Activated T-helper 1 cell treated with anti-CD3 and anti-CD28 coated beads, Interleukin-12 subunit alpha, Interleukin-12 subunit beta, Interleukin-2, Interleukin-4 antibody, amounts not matched to agents 30 ng/mL and 10 ng/mL and 1 ng/mL, durations not matched to agents 14 hours and 24 hours and 36 hours (primary cell): ENCODE measurements at regions of chr6 and their contacts with region 1.

Region 1: DNA sequence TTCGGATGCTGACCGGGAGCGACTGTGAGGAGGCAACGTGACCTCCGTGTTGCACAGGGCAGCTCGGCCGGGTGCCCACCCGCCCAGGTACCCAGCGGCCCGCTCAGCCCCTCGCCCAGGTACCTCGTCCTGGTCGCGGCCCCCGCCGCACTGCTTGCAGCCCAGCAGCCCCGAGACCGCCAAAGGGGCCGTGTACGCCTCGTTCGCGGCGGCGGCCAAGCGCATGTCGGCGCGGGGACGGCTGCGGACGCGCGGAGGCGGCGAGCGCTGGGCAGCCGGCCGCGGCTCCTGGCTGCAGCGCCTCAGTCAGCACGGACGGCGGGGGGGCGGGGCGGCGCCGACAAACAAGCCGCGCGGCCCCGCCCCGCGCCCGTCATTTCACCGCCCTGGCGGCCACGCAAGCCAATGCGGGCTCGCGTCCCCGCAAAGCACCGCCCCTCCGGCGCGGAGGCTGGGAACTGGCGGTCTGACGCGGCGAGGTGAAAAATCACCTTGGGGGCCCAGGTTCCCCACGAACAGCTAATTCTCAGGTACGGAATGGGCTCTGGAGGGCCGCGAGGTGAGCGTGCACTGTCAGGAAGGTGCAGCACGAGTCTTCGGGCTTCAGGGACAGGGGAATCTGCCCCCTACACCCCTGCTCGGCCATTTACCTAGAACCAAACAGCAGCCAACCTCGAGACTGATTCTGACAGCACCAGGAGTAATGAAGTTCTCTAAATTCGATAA is 85.2 kb downstream of the SESN1 start:
- DNase-seq: peak; percentile 87
- H3K4me3 Mint-ChIP-seq: peak overlapping the region; percentile 92
- H3K27ac Mint-ChIP-seq: peak overlapping the region; percentile 84
- H3K4me1 Mint-ChIP-seq: peaks cover 31% of the 10 kb centered on the region
- H3K27me3 Mint-ChIP-seq: no peaks in the 10 kb centered on the region

Region 2: GRCh38 chr6:108541838-108542759 is 467.3 kb before region 1 on chr6:
- intact Hi-C with region 1: loop called (anchors 5 kb)
- DNase-seq: peak; percentile 52
- H3K4me3 Mint-ChIP-seq: no peak overlapping the region
- H3K27ac Mint-ChIP-seq: no peak overlapping the region
- H3K4me1 Mint-ChIP-seq: peaks cover 10% of the 10 kb centered on the region
- H3K27me3 Mint-ChIP-seq: peaks cover 39% of the 10 kb centered on the region

Region 3: GRCh38 chr6:108820006-108820405 is 189.4 kb before region 1 on chr6:
- intact Hi-C with region 1: no loop called
- DNase-seq: no peak
- H3K4me3 Mint-ChIP-seq: no peak overlapping the region
- H3K27ac Mint-ChIP-seq: no peak overlapping the region
- H3K4me1 Mint-ChIP-seq: no peaks in the 10 kb centered on the region
- H3K27me3 Mint-ChIP-seq: peaks cover 23% of the 10 kb centered on the region

Region 4: GRCh38 chr6:108883172-108883571 is 126.2 kb before region 1 on chr6:
- intact Hi-C with region 1: loop called (anchors 1 kb)
- DNase-seq: no peak
- H3K4me3 Mint-ChIP-seq: peak overlapping the region; percentile 56
- H3K27ac Mint-ChIP-seq: peak overlapping the region; percentile 93
- H3K4me1 Mint-ChIP-seq: peaks cover 58% of the 10 kb centered on the region
- H3K27me3 Mint-ChIP-seq: peaks cover 28% of the 10 kb centered on the region

Region 5: DNA sequence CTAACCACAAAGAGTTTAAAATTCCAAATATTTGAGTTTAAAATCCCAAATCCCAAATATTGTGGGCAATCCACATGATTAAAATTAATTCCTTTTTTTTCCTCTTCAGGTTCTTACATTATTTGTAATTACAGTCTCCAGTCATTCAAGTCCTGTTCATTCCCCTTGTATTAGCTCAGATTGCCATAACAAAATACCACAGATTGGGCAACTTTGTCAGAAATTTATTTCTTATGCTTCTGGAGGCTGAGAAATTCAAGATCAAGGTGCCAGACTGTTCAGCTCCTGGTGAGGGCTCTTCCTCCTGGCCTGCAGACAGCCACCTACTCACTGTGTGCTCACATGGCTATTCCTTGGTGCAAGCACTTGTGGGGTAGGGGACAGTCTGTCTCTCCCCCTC is 55.7 kb before region 1 on chr6:
- intact Hi-C with region 1: loop called (anchors 2 kb)
- DNase-seq: no peak
- H3K4me3 Mint-ChIP-seq: no peak overlapping the region
- H3K27ac Mint-ChIP-seq: no peak overlapping the region
- H3K4me1 Mint-ChIP-seq: peaks cover 17% of the 10 kb centered on the region
- H3K27me3 Mint-ChIP-seq: peaks cover 8% of the 10 kb centered on the region

Region 6: GRCh38 chr6:109373762-109374161 is 364.4 kb after region 1 on chr6:
- intact Hi-C with region 1: loop called (anchors 2 kb)
- DNase-seq: peak; percentile 46
- H3K4me3 Mint-ChIP-seq: peak overlapping the region; percentile 81
- H3K27ac Mint-ChIP-seq: peak overlapping the region; percentile 92
- H3K4me1 Mint-ChIP-seq: peaks cover 75% of the 10 kb centered on the region
- H3K27me3 Mint-ChIP-seq: no peaks in the 10 kb centered on the region

Region 7: GRCh38 chr6:110815217-110816109 is 1806.1 kb after region 1 on chr6 and contains the start of gene CDK19:
- intact Hi-C with region 1: loop called (anchors 5 kb)
- DNase-seq: peak; percentile 97
- H3K4me3 Mint-ChIP-seq: peak within 1 kb of the TSS; percentile 97
- H3K27ac Mint-ChIP-seq: peak within 1 kb of the TSS; percentile 98
- H3K4me1 Mint-ChIP-seq: peaks cover 38% of the 10 kb centered on the region
- H3K27me3 Mint-ChIP-seq: no peaks in the 10 kb centered on the region
- total RNA-seq, gene CDK19: 12.4 and 13.7 TPM in 2 replicates